CD4-positive, alpha-beta memory T cell (primary cell): ENCODE measurements at regions of chr2 and their contacts with region 1.

Region 1: DNA sequence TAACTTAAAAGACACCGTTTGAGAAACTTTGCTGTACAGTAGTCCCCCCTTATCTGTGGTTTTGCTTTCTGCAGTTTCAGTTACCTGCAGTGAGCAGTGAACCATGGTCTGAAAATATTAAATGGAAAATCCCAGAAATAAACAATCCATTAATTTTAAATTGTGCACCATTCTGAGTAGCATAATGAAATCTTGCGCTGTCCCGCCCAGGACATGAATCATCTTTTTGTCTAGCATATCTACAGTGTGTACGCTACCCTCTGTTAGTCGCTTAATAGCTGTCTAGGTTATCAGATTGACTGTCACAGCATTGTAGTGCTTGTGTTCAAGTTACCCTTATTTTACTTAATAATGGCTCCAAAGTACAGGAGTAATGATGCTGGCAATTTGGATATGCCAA is 6.1 kb downstream of the ARPC2 start:
- DNase-seq: peak in 1 of 5 donors; percentile 63
- H3K4me3 ChIP-seq: peak overlapping the region in 1 of 2 donors; percentile 15
- H3K4me3 Mint-ChIP-seq: peak overlapping the region; percentile 72 to 95 (median 73)
- H3K27ac ChIP-seq: peak overlapping the region; percentile 93
- H3K27ac Mint-ChIP-seq: peak overlapping the region; percentile 77 to 95 (median 91)
- H3K4me1 ChIP-seq: peaks cover 90% of the 10 kb centered on the region
- H3K4me1 Mint-ChIP-seq: peaks cover 65 to 97% (median 81%) of the 10 kb centered on the region in 4 donors
- H3K27me3 ChIP-seq: no peaks in the 10 kb centered on the region
- H3K27me3 Mint-ChIP-seq: no peaks in the 10 kb centered on the region

Region 2: GRCh38 chr2:218206306-218206705 is 16.7 kb before region 1 on chr2:
- CTCF ChIA-PET with region 1: no interaction called
- POLR2A ChIA-PET with region 1: no interaction called
- intact Hi-C with region 1: no loop called
- DNase-seq: no peak
- H3K4me3 ChIP-seq: no peak overlapping the region
- H3K4me3 Mint-ChIP-seq: no peak overlapping the region
- H3K27ac ChIP-seq: no peak overlapping the region
- H3K27ac Mint-ChIP-seq: no peak overlapping the region
- H3K4me1 ChIP-seq: no peaks in the 10 kb centered on the region
- H3K4me1 Mint-ChIP-seq: no peaks in the 10 kb centered on the region
- H3K27me3 ChIP-seq: no peaks in the 10 kb centered on the region
- H3K27me3 Mint-ChIP-seq: no peaks in the 10 kb centered on the region

Region 3: GRCh38 chr2:218234521-218234920 is 11.5 kb after region 1 on chr2:
- CTCF ChIA-PET with region 1: interaction called, 67 read pairs
- POLR2A ChIA-PET with region 1: interaction called, 144 read pairs
- intact Hi-C with region 1: loop called (anchors 1 kb)
- DNase-seq: no peak
- H3K4me3 ChIP-seq: no peak overlapping the region
- H3K4me3 Mint-ChIP-seq: no peak overlapping the region
- H3K27ac ChIP-seq: no peak overlapping the region
- H3K27ac Mint-ChIP-seq: peak overlapping the region in 3 of 7 donors; percentile 48 to 79 (median 68)
- H3K4me1 ChIP-seq: peaks cover 30% of the 10 kb centered on the region
- H3K4me1 Mint-ChIP-seq: peaks cover 22 to 36% (median 27%) of the 10 kb centered on the region in 4 donors
- H3K27me3 ChIP-seq: no peaks in the 10 kb centered on the region
- H3K27me3 Mint-ChIP-seq: no peaks in the 10 kb centered on the region

Region 4: DNA sequence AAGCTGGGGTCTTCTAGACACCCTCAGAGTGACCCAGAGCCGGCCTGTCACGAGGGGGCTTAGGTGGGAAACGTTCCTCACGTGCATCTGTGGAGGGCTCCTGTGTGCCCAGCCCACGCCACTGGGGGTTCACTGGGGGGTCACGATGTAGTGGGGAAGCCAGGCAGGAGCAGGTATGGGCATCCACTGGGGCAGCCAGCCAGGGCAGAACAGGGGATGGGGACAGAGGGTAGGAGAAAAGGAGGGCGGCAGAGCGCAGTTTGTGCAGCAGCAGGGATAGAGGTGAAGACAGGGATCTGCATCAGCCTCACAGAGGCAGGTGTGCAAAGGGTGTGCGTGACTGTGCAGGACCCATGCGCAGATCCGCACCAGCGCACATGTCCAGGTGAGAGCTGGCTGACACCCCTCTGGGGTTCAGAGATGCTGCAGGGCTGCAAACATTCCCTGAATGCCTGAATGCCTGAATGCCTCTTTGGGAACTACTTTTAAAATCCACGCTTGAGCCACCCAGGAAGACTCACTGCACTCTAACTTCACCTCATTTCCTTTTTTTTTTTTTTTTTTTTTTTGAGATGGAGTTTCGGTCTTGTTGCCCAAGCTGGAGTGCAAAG is 57.3 kb after region 1 on chr2:
- CTCF ChIA-PET with region 1: no interaction called
- POLR2A ChIA-PET with region 1: no interaction called
- intact Hi-C with region 1: no loop called
- DNase-seq: no peak
- H3K4me3 ChIP-seq: no peak overlapping the region
- H3K4me3 Mint-ChIP-seq: no peak overlapping the region
- H3K27ac ChIP-seq: peak overlapping the region; percentile 12
- H3K27ac Mint-ChIP-seq: peak overlapping the region in 5 of 7 donors; percentile 17 to 88 (median 81)
- H3K4me1 ChIP-seq: peaks cover 35% of the 10 kb centered on the region
- H3K4me1 Mint-ChIP-seq: peaks cover 16 to 44% (median 32%) of the 10 kb centered on the region in 4 donors
- H3K27me3 ChIP-seq: no peaks in the 10 kb centered on the region
- H3K27me3 Mint-ChIP-seq: no peaks in the 10 kb centered on the region